Sigmoid colon (tissue), 7 donors: ENCODE measurements at regions of chr6 and their contacts with region 1.

Region 1: GRCh38 chr6:142306736-142307135 is 4.9 kb downstream of the ADGRG6 start:
- DNase-seq: no peak
- H3K4me3 ChIP-seq: no peak overlapping the region
- H3K27ac ChIP-seq: no peak overlapping the region
- H3K4me1 ChIP-seq: peaks cover 0 to 7% (median 2%) of the 10 kb centered on the region in 4 donors
- H3K27me3 ChIP-seq: peaks cover 3 to 19% (median 4%) of the 10 kb centered on the region in 3 donors
- CTCF ChIP-seq: no peak
- EP300 ChIP-seq: no peak
- POLR2A ChIP-seq: no peak

Region 2: GRCh38 chr6:141552473-141552878 is 754.3 kb before region 1 on chr6:
- intact Hi-C with region 1: no loop called
- DNase-seq: no peak
- H3K4me3 ChIP-seq: no peak overlapping the region
- H3K27ac ChIP-seq: no peak overlapping the region
- H3K4me1 ChIP-seq: no peaks in the 10 kb centered on the region
- H3K27me3 ChIP-seq: no peaks in the 10 kb centered on the region
- CTCF ChIP-seq: no peak
- EP300 ChIP-seq: no peak
- POLR2A ChIP-seq: no peak

Region 3: DNA sequence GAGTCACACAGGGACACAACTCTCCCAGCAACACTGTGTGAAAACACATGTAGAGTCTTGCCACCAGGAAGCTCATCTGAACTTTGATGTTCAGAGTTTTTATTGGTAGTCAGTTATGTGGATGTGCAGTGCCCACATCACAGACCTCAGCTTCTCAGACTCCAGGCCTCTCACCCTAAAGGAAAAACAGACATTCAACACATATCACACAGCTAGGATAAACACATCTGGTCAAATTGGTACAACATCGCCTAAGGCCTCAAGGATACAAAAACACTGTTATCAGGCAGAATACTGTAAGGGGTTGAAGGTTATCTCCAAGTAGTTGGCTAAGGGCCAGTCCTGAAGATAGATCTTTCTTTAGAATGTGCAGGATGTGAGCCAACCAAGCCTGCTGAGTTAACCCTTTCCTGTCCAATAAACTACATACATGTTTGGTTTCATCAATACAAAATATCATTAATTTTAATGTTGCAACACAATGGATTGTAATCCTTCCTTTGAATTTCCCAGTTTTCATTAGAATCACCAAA is 482.4 kb before region 1 on chr6:
- intact Hi-C with region 1: no loop called
- DNase-seq: no peak
- H3K4me3 ChIP-seq: no peak overlapping the region
- H3K27ac ChIP-seq: no peak overlapping the region
- H3K4me1 ChIP-seq: no peaks in the 10 kb centered on the region
- H3K27me3 ChIP-seq: no peaks in the 10 kb centered on the region
- CTCF ChIP-seq: no peak
- EP300 ChIP-seq: no peak
- POLR2A ChIP-seq: no peak

Region 4: GRCh38 chr6:142387997-142388815 is 81.5 kb after region 1 on chr6:
- intact Hi-C with region 1: loop called (anchors 5 kb)
- DNase-seq: no peak
- H3K4me3 ChIP-seq: no peak overlapping the region
- H3K27ac ChIP-seq: no peak overlapping the region
- H3K4me1 ChIP-seq: no peaks in the 10 kb centered on the region
- H3K27me3 ChIP-seq: no peaks in the 10 kb centered on the region
- CTCF ChIP-seq: peak in 2 of 4 experiments; percentile 23 to 33
- EP300 ChIP-seq: no peak
- POLR2A ChIP-seq: no peak